Tibial artery (tissue), 4 donors: ENCODE measurements at regions of chr9 and their contacts with region 1.

Region 1: DNA sequence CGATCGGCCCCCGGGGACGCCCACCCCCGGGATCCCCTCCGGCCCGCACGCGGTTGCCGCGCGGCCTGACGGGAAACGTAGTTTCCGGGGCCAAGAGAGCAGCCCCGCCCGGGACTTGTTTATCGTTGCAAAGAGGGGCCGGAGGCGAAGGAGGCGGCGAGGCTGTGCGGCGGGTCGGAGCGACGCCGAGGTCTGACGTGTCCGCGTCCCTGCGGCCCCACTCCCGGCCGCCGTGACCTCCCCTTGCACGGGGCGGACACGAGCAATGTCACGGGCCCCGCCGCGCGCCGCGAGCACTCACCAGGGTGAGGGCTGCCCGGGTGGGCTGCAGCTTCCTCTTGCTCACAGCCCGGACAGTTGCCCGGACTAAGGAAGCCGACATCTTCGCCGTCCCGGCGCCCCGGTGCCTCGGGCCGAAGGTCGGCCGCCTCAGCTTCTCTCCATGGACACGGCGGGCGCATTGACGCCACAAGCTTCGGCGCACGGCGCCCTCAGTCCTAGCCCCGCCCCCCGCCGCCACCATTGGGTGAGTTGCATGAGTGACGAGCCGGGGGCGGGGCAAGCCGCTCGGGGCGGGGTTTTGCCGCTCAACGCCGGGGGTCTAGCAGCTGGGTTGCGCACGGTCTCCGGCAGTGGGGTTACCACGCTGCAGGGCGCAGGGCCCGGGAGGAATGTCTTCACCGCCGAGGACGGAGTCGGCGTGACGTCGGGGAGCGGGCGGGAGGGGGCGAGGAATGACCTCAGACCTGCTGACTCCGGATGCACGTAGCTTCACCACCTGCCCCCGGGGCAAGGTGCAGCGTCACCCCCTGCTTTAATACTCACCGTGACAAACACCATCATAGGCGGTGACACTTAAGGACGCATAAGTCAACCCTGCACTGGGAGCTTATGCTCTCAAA is at the start of gene ISCA1:
- DNase-seq: peak; percentile 98
- H3K4me3 ChIP-seq: peak within 1 kb of the TSS; percentile 81 to 85
- H3K27ac ChIP-seq: peak within 1 kb of the TSS; percentile 95 to 96
- H3K4me1 ChIP-seq: peaks cover 0 to 36% (median 23%) of the 10 kb centered on the region in 4 donors
- H3K27me3 ChIP-seq: no peaks in the 10 kb centered on the region
- CTCF ChIP-seq: no peak

Region 2: DNA sequence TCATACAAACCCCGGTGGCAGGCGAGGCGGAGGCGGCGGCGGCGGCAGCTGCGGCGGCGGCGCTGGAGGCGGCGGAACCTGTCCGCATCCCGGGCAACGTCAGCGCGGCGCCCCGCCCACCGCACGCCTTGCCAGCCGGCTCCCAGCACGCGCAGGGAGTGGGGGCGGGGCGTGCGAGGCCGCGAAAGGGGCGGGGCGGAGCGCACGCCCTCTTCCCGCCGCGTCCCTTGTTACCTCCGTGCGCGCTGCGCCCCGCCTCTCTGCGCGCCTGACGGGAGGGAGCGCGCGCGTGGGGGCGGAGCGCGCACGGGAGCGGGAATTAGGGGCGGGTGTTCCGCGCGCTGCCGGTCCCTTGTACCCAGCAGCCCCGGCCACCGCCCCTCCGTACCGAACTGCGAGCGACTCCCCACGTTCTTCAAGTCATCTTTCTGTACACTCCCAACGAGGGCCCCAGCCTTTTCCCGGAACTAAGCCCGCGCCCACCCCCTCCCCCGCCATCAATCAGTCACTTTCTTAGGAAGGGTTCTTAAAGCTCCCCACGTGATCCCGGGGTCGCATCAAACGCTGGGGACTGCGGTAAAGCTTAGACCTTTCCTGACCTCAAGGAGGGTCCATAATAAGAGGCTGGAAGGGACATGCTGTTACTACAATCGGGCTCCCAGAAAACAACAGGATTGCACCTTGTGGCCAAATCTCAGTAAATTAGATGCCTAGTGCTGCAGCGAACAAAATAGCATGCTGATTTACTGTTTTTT is 540.3 kb before region 1 on chr9 and contains the start of gene AGTPBP1:
- intact Hi-C with region 1: no loop called
- DNase-seq: peak; percentile 91 to 97
- H3K4me3 ChIP-seq: peak within 1 kb of the TSS; percentile 81 to 90
- H3K27ac ChIP-seq: peak within 1 kb of the TSS; percentile 73 to 77
- H3K4me1 ChIP-seq: peaks cover 0 to 18% (median 3%) of the 10 kb centered on the region in 4 donors
- H3K27me3 ChIP-seq: no peaks in the 10 kb centered on the region
- CTCF ChIP-seq: no peak

Region 3: DNA sequence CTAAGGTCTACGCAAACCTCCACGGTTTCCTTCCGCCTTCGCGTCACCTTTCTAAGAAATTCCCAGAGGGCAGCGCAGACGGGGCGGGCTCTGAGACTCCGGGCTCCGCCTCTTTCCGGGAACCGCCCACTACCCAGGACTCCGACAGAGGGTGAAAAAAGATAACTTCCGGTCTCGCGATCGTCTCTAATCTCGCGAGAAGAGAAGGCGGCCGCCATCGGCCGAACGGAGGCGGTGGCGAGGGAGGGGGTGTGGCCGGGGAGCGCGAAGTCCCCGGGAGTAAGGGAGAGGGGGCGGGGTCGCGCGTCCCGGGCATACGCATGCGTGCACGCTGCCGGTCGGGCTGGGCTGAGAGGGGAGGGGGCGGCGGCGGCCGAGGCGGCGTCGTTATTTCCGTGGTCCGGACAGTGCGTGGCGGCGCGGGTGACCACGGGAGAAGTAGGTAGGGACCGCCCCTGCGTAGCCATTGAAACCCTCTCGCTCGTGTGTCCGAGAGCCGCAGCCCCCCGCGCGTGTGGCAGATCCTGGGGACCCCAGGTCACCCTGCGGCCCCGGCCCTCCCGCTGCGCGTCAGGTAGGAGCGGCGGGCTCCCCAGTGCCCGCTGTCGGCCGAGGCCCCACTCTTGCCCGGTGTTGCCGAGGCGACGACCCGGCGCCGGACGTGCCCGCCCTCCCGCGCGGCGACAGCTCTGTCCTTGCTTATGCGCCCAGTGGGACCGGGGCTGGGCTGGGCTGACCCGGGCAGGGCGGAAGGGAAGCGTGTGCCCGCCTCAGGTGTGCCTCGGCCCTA is 341.3 kb before region 1 on chr9 and contains the start of gene NAA35:
- intact Hi-C with region 1: loop called (anchors 10 kb)
- DNase-seq: peak; percentile 96 to 99
- H3K4me3 ChIP-seq: peak within 1 kb of the TSS; percentile 87 to 99
- H3K27ac ChIP-seq: peak within 1 kb of the TSS; percentile 90 to 95
- H3K4me1 ChIP-seq: peaks cover 0 to 44% (median 24%) of the 10 kb centered on the region in 4 donors
- H3K27me3 ChIP-seq: no peaks in the 10 kb centered on the region
- CTCF ChIP-seq: no peak

Region 4: DNA sequence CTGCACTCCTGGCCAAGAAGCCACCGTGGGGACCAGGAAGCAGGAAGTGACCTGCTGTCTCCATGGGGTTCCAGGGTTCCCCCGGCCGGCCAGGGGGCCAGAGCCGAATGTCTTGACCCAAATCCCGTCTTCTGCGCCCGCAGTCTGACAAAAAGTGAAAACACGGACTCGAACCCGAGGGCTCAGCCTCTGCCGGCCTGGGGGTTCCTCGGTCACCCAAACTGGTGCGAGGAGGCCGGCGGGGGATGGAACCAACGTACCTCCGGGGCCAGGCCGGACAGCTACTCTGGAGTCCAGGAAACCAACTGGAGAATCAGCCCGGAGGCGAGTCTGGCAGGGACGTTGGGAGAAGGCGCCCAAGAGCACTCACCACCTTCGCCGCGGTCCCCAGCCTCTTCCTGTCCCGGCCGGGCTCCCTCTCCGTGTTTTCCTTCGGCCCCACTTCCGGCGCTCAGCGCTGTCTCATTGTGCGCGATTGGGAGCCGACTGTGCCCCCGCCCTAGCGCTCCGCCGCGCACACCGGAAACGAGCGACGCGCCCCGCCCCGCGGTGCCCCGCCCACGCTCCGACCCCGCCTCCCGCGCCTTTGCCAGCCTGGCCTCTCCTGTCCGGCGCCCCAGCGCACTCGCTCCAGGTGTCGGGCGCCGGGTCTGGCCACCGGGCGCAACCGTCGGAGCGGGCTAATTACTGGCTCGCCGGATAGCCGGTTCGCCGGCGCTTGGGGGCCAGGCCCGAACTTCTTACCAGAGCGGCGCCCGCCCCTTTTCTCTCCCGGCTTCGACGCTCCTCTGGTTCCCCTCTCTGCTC is 71.9 kb after region 1 on chr9 and contains the start of gene TUT7:
- intact Hi-C with region 1: loop called (anchors 5 kb)
- DNase-seq: peak; percentile 94 to 98
- H3K4me3 ChIP-seq: peak within 1 kb of the TSS; percentile 77 to 93
- H3K27ac ChIP-seq: peak within 1 kb of the TSS; percentile 94 to 96
- H3K4me1 ChIP-seq: peaks cover 0 to 49% (median 40%) of the 10 kb centered on the region in 4 donors
- H3K27me3 ChIP-seq: no peaks in the 10 kb centered on the region
- CTCF ChIP-seq: no peak